ENCODE measurements at regions of chr16 and their contacts with region 1.

Region 1: DNA sequence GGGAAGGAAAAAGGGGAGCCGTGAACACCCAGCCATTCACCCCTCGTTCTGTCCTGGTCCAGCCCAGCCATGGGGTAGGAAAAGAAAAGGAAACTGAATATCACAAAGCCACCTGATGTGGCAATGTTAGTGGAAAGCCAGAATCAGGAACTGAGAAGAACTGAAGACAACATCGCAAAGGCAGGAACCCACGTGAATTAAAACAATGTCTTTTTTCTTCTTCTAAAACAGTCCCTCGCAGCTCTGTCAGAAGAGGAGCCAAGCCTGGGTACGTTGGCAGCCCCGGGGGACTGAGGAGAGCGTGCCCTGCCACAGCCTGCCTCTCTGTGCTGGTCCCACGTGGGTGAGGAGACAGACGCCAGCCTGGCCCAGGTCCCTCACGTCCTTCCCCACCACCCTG is 55.0 kb downstream of the ZNF423 start:
- DNase-seq: no peak
- ATAC-seq: no peak
- H3K4me3 ChIP-seq: no peak overlapping the region
- H3K4me3 Mint-ChIP-seq: no peak overlapping the region
- H3K27ac ChIP-seq: no peak overlapping the region
- H3K27ac Mint-ChIP-seq: no peak overlapping the region
- H3K4me1 ChIP-seq: no peaks in the 10 kb centered on the region
- H3K4me1 Mint-ChIP-seq: no peaks in the 10 kb centered on the region
- H3K27me3 ChIP-seq: peaks cover 0 to 17% of the 10 kb centered on the region in 2 experiments
- H3K27me3 Mint-ChIP-seq: peaks cover 0 to 6% of the 10 kb centered on the region in 2 donors

Region 2: GRCh38 chr16:49416001-49416675 is 384.7 kb before region 1 on chr16:
- CTCF ChIA-PET with region 1: interaction called in 1 of 2 experiments, 11 read pairs
- POLR2A ChIA-PET with region 1: no interaction called
- DNase-seq: no peak
- ATAC-seq: no peak
- H3K4me3 ChIP-seq: no peak overlapping the region
- H3K4me3 Mint-ChIP-seq: no peak overlapping the region
- H3K27ac ChIP-seq: no peak overlapping the region
- H3K27ac Mint-ChIP-seq: no peak overlapping the region
- H3K4me1 ChIP-seq: no peaks in the 10 kb centered on the region
- H3K4me1 Mint-ChIP-seq: no peaks in the 10 kb centered on the region
- H3K27me3 ChIP-seq: peaks cover 0 to 13% of the 10 kb centered on the region in 2 experiments
- H3K27me3 Mint-ChIP-seq: peaks cover 0 to 3% of the 10 kb centered on the region in 2 donors